ENCODE measurements at regions of chr19 and their contacts with region 1.

Region 1: DNA sequence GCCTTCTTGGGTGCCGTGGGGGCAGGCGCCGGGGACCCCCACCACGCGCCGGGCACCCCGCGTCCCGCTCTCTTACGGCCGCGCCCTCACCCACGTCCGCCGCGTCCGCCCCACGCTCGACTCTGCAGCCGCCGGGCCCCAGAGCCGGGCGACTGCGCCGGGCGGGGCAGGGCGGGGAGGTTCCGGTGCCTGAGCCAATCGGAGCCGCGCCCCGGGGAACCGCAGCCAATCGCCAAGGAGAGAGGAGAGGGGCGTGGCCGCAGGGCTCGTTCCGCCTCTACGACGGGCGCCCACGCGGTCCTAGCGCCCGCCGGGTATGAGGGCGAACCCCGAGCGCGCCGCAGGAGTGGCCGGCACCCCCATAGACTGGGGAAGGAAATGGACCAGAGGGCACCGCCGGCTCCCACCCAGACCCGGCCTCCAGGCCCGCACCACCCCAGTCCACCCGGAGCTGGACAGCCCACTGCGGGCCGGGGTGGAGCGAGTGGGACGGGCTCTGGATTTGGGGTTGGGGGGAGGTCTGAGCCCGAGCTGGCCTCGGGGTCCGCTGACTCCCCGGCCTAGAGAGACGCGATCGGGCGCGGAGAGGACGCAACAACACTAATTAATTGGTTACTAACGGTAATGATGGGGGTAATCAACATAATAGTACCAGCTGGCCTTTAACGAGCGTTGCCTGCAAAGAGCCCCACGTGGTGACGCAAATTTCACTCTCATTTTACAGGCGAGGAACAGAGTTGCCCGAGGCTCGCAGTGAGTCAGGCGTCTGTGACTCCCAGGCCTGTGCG is at the start of gene MFSD12:
- DNase-seq: peak; percentile 90 to 99 (median 94)

Region 2: DNA sequence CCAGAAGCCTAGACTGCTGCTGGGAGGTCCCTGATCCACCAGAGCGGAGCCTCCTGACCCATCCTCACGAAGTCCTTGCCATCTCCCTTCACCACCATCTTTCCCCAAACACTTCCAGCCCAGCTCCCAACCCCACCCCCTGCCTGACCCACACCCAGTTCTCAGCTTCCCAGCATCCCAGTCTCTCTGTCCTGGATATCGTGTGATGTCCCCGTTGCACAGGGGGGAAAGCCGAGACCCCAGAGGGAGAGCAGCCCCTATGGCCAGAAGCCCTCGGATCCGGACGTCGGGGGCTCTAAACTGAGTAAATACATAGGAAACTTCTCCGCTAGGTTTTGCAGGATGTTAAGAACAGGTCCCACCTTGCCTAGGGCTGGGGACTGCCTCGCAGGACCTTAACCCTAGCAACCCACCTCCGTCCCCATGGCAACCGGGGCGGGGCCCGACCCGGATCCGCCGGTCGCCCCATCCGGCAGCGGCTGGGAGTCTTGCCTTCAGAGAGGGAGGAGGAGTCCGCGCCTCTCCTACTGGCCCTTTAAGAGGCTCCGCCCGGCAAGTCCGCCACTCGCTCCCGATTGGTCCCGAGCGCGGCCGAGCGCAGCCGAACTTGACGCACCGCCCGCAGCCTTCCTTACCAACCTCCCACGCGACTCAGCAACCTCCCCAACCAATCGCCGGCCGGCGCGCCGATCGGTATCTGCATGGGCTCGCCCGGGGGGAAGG is 14.6 kb after region 1 on chr19:
- intact Hi-C with region 1: loop called (anchors 1 kb)
- DNase-seq: peak; percentile 99 to 100 (median 100)

Region 3: DNA sequence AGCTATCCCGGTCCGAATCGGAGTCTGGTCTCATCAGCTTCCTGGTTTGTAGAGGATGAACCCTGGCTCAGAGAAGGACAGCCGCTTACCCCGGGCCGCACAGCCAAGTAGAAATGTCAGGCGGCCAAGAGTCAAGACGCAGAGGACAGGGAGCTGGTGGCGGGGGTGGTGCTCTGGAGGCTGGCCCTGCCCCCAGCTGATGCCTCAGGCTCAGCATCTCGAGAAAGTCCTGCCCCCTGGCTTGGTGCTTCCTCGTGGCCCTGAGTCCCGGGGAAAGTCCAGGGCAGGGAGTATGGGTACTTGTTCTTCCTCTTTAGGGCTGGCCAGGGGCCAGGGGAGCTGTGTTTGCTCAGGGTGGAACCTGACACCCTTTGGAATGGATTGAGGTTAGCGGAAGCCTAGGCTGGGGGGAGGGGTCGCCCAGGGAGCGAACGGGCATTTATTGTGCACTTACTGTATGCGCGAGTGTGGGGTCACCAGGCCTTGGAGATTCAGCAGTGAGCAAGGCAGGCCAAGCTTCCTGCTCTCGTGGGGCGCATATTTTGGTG is 152.7 kb after region 1 on chr19:
- intact Hi-C with region 1: loop called (anchors 10 kb)
- DNase-seq: peak in 4 of 10 donors; percentile 15 to 90 (median 26)